RWPE1 (cell line): ENCODE measurements at regions of chr10 and their contacts with region 1.

Region 1: GRCh38 chr10:97179731-97180362 is 5.9 kb downstream of the SLIT1 start:
- DNase-seq: no peak
- H3K27ac ChIP-seq: no peak overlapping the region
- CTCF ChIP-seq: no peak

Region 2: GRCh38 chr10:97089209-97089870 is 90.5 kb before region 1 on chr10:
- CTCF ChIA-PET with region 1: interaction called, 10 read pairs
- POLR2A ChIA-PET with region 1: no interaction called
- DNase-seq: peak; percentile 94
- H3K27ac ChIP-seq: no peak overlapping the region
- CTCF ChIP-seq: no peak

Region 3: DNA sequence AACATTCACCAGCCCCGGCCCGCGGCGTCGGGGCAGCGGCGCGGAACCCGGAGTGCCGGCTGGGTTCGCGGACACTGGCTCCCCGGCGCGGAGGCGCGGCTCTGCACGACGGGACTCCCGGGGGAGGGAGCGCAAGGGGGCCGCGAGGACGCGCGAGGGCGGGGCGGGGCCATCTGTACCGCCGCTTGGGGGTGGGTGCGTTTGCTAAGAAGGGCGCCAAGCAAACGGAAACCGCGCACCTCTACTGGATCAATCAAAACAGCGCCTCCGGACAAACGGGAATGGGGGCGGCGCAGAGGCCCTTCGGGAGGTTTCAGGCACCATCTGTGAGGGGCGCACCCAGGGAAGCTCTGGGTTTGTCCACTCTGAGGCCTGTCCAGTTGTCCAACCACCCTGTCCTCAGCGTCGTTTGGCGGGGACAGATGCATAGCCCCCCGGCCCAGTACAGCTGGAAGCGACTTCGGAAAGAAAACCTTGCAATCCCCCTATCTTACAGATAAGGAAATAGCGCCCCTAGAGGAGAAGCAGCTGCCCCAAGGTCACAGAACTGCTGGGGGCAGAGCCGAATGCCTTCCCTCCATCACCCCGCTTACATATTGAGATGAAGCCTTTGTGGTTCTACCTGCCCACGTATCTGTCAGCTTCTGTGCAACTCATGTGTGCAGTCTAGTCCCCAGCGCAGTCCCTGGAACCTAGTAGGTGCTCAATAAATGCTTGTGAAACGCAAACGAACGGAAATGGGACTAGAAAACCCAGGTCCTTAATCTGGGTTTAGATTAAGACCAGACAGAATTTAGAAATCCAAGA is 16.6 kb after region 1 on chr10:
- CTCF ChIA-PET with region 1: interaction called, 10 read pairs
- POLR2A ChIA-PET with region 1: no interaction called
- DNase-seq: peak; percentile 68
- H3K27ac ChIP-seq: no peak overlapping the region
- CTCF ChIP-seq: peak; percentile 77

Region 4: GRCh38 chr10:97428572-97428981 is 248.7 kb after region 1 on chr10:
- CTCF ChIA-PET with region 1: no interaction called
- POLR2A ChIA-PET with region 1: no interaction called
- DNase-seq: no peak
- H3K27ac ChIP-seq: peak overlapping the region; percentile 37; the same call in 1 of the 2 replicates
- CTCF ChIP-seq: no peak